ENCODE measurements at regions of chrX and their contacts with region 1.

Region 1: DNA sequence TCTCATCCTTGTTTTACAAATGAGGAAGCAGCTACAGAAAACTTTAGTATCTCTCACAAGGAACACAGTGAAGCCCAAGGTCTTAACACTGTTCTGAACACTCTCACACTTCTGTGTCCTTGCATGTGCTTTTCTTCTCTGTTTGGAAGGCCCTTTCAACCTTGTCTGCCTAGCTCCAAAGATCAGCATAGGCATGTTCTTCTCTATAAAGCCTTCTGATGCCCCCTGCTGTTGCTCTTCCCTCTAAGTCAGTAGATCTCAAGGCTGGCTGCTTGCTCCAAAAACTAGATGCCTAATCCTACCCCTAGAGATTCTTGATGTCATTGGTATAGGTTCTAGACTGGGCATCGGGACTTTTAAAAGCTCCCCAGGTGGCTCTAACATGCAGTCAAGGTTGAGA is 5.9 kb downstream of the APOO start:
- DNase-seq: peak; percentile 72
- H3K4me3 ChIP-seq: no peak overlapping the region
- H3K27ac ChIP-seq: peak overlapping the region; percentile 52
- H3K4me1 ChIP-seq: no peaks in the 10 kb centered on the region
- H3K27me3 ChIP-seq: no peaks in the 10 kb centered on the region
- CTCF ChIP-seq: peak; percentile 48

Region 2: GRCh38 chrX:23694606-23695005 is 207.2 kb before region 1 on chrX:
- intact Hi-C with region 1: loop called (anchors 1 kb)
- DNase-seq: peak; percentile 52
- H3K4me3 ChIP-seq: no peak overlapping the region
- H3K27ac ChIP-seq: no peak overlapping the region
- H3K4me1 ChIP-seq: no peaks in the 10 kb centered on the region
- H3K27me3 ChIP-seq: no peaks in the 10 kb centered on the region
- CTCF ChIP-seq: peak; percentile 33

Region 3: DNA sequence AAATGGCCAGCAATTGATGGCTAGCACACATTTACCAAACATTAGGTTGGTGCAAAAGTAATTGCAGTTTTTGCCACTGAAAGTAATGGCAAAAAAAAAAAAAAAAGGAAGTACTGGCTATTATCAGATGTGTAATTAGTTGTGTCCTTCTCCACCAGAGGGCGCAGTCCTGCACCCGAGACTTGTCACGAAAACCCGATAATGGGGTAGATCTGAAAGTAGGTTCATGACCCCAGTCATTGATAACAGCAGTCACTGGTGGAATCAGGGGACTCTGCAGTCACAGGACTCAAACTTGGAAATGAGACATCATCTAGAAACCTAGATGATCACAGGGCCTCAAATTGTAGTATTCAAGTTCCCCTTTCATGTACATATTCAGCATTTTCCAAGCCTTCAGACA is 145.6 kb before region 1 on chrX:
- intact Hi-C with region 1: loop called (anchors 5 kb)
- DNase-seq: peak; percentile 74
- H3K4me3 ChIP-seq: no peak overlapping the region
- H3K27ac ChIP-seq: no peak overlapping the region
- H3K4me1 ChIP-seq: no peaks in the 10 kb centered on the region
- H3K27me3 ChIP-seq: no peaks in the 10 kb centered on the region
- CTCF ChIP-seq: peak; percentile 65

Region 4: GRCh38 chrX:23782863-23783568 is 118.8 kb before region 1 on chrX and contains the start of gene SAT1:
- intact Hi-C with region 1: loop called (anchors 5 kb)
- DNase-seq: peak; percentile 95
- H3K4me3 ChIP-seq: peak within 1 kb of the TSS; percentile 42
- H3K27ac ChIP-seq: peak within 1 kb of the TSS; percentile 80
- H3K4me1 ChIP-seq: no peaks in the 10 kb centered on the region
- H3K27me3 ChIP-seq: no peaks in the 10 kb centered on the region
- CTCF ChIP-seq: peak; percentile 74
- total RNA-seq, gene SAT1: 301 to 608 TPM

Region 5: GRCh38 chrX:24153134-24153795 is 251.5 kb after region 1 on chrX:
- intact Hi-C with region 1: no loop called
- DNase-seq: no peak
- H3K4me3 ChIP-seq: no peak overlapping the region
- H3K27ac ChIP-seq: no peak overlapping the region
- H3K4me1 ChIP-seq: peaks cover 2% of the 10 kb centered on the region
- H3K27me3 ChIP-seq: no peaks in the 10 kb centered on the region
- CTCF ChIP-seq: no peak

Region 6: GRCh38 chrX:24515447-24515846 is 613.6 kb after region 1 on chrX:
- intact Hi-C with region 1: no loop called
- DNase-seq: no peak
- H3K4me3 ChIP-seq: no peak overlapping the region
- H3K27ac ChIP-seq: no peak overlapping the region
- H3K4me1 ChIP-seq: no peaks in the 10 kb centered on the region
- H3K27me3 ChIP-seq: no peaks in the 10 kb centered on the region
- CTCF ChIP-seq: no peak